ENCODE measurements at regions of chr6 and their contacts with region 1.

Region 1: GRCh38 chr6:4606821-4607704 is 169.1 kb upstream of the CDYL start:
- DNase-seq: peak; percentile 91
- H3K4me3 ChIP-seq: no peak overlapping the region
- H3K27ac ChIP-seq: peak overlapping the region; percentile 83
- H3K4me1 ChIP-seq: peaks cover 30% of the 10 kb centered on the region
- H3K27me3 ChIP-seq: no peaks in the 10 kb centered on the region
- CTCF ChIP-seq: no peak
- POLR2A ChIP-seq: no peak

Region 2: GRCh38 chr6:4319981-4320683 is 286.9 kb before region 1 on chr6:
- CTCF ChIA-PET with region 1: no interaction called
- POLR2A ChIA-PET with region 1: no interaction called
- dilution Hi-C with region 1: no loop called
- intact Hi-C with region 1: loop called (anchors 1 kb)
- DNase-seq: peak; percentile 84
- H3K4me3 ChIP-seq: no peak overlapping the region
- H3K27ac ChIP-seq: peak overlapping the region; percentile 38
- H3K4me1 ChIP-seq: peaks cover 30% of the 10 kb centered on the region
- H3K27me3 ChIP-seq: no peaks in the 10 kb centered on the region
- CTCF ChIP-seq: no peak
- POLR2A ChIP-seq: no peak

Region 3: DNA sequence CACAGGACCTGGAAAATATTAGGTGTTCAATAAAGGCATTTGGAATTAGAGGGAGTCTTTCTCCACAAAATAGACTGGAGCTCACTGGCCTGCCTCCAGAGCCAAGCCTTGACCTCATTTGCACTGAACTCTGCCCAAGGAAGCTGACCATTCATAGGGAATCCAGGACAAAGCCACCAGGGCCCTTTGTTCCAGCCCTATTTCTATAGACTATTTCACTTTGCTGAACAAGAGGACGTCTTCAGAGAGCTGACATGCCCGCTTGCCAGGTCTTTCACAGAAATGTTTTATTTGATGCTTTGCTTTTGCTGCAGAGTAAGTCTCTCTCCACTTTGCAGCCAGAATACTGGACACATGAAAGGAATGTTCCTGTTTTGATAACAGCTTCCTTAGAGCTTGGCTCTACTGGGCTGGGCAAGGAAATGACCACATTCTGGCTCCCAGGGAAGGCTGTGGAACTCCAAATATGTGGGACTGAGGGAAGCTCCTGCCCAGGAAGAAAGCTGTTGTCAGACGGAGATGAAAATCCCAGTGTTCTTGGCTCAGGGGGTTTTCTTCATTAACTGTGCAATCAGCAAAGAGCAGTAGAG is 25.2 kb before region 1 on chr6:
- CTCF ChIA-PET with region 1: interaction called, 3 read pairs
- POLR2A ChIA-PET with region 1: no interaction called
- dilution Hi-C with region 1: no loop called
- intact Hi-C with region 1: loop called (anchors 1 kb)
- DNase-seq: peak; percentile 76
- H3K4me3 ChIP-seq: no peak overlapping the region
- H3K27ac ChIP-seq: peak overlapping the region; percentile 81
- H3K4me1 ChIP-seq: peaks cover 22% of the 10 kb centered on the region
- H3K27me3 ChIP-seq: no peaks in the 10 kb centered on the region
- CTCF ChIP-seq: no peak
- POLR2A ChIP-seq: no peak

Region 4: GRCh38 chr6:4687989-4688947 is 81.2 kb after region 1 on chr6:
- CTCF ChIA-PET with region 1: no interaction called
- POLR2A ChIA-PET with region 1: no interaction called
- dilution Hi-C with region 1: no loop called
- intact Hi-C with region 1: loop called (anchors 5 kb)
- DNase-seq: peak; percentile 87
- H3K4me3 ChIP-seq: peak overlapping the region in 1 of 3 experiments; percentile 54
- H3K27ac ChIP-seq: peak overlapping the region; percentile 80
- H3K4me1 ChIP-seq: peaks cover 11% of the 10 kb centered on the region
- H3K27me3 ChIP-seq: peaks cover 4% of the 10 kb centered on the region in 2 experiments
- CTCF ChIP-seq: no peak
- POLR2A ChIP-seq: no peak

Region 5: GRCh38 chr6:4936681-4937041 is 329.6 kb after region 1 on chr6:
- CTCF ChIA-PET with region 1: no interaction called
- POLR2A ChIA-PET with region 1: no interaction called
- dilution Hi-C with region 1: no loop called
- intact Hi-C with region 1: loop called (anchors 10 kb)
- DNase-seq: peak; percentile 67
- H3K4me3 ChIP-seq: no peak overlapping the region
- H3K27ac ChIP-seq: no peak overlapping the region
- H3K4me1 ChIP-seq: peaks cover under 1% of the 10 kb centered on the region
- H3K27me3 ChIP-seq: no peaks in the 10 kb centered on the region
- CTCF ChIP-seq: peak; percentile 41 to 59
- POLR2A ChIP-seq: no peak

Measured in endothelial cell of umbilical vein (primary cell).